Prostate gland (tissue), 2 donors: ENCODE measurements at regions of chr2 and their contacts with region 1.

Region 1: GRCh38 chr2:208265801-208266552 is at the start of gene PIKFYVE:
- DNase-seq: peak; percentile 94
- H3K4me3 ChIP-seq: peak within 1 kb of the TSS; percentile 74 to 93
- H3K27ac ChIP-seq: peak within 1 kb of the TSS; percentile 92 to 95
- H3K4me1 ChIP-seq: no peaks in the 10 kb centered on the region
- H3K27me3 ChIP-seq: no peaks in the 10 kb centered on the region
- CTCF ChIP-seq: peak in 1 of 4 experiments; percentile 18
- POLR2A ChIP-seq: peak; percentile 77
- total RNA-seq, gene PIKFYVE: 26.7 to 47.1 TPM

Region 2: DNA sequence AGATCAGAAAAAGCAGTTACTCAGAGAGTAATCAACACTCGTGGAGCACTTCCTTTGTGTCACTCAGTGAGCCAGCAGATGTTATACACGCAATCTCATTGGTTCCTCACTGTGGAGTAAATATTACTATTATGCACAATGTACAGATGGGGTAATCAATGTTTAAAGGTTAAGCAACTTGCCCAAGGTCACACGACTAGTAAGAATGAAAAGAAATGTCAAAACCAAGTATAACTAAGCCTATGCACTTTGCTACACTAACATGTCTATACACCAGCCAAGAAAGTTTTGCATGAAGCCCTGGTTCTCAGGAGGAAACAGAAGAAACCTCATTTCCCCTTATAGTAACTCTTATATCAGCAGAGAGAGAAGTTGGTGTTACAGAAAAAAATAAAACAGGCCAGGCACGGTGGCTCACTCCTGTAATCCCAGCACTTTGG is 646.2 kb before region 1 on chr2:
- intact Hi-C with region 1: loop called (anchors 10 kb)
- DNase-seq: no peak
- H3K4me3 ChIP-seq: no peak overlapping the region
- H3K27ac ChIP-seq: no peak overlapping the region
- H3K4me1 ChIP-seq: no peaks in the 10 kb centered on the region
- H3K27me3 ChIP-seq: no peaks in the 10 kb centered on the region
- CTCF ChIP-seq: no peak
- POLR2A ChIP-seq: no peak

Region 3: DNA sequence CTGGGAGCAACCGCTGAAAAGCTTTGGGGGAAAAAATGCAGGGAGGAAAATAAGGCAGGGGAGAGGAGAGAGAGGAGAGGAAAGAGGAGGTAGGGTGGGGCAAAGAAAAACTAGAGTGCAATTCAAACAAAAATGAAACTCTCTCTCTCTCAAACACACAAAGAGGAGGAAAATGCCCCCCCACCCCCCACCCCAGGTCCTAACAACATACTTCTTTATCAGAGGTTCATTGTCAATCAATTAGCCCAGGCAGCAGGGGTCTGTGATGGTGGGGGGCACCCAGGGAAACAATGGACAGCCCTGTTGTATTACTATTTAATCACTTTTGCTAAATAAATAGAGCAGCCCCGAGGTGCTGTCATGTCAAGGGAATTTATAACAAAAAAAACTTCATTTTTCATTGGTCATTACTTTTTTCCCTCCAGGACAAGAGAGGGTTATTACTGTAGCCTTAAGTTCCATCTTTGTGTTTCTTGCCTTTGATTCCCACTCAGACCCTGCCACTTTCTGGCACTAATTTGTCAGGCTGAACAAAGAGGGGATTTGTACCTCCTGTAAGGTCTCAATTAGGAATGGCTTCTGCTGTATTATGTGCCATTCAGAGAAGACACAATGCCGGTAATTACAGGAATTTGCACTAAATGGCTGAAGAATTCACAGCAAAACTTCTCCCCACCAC is 295.7 kb before region 1 on chr2:
- intact Hi-C with region 1: no loop called
- DNase-seq: no peak
- H3K4me3 ChIP-seq: no peak overlapping the region
- H3K27ac ChIP-seq: no peak overlapping the region
- H3K4me1 ChIP-seq: peaks cover 4% of the 10 kb centered on the region
- H3K27me3 ChIP-seq: no peaks in the 10 kb centered on the region
- CTCF ChIP-seq: no peak
- POLR2A ChIP-seq: no peak

Region 4: DNA sequence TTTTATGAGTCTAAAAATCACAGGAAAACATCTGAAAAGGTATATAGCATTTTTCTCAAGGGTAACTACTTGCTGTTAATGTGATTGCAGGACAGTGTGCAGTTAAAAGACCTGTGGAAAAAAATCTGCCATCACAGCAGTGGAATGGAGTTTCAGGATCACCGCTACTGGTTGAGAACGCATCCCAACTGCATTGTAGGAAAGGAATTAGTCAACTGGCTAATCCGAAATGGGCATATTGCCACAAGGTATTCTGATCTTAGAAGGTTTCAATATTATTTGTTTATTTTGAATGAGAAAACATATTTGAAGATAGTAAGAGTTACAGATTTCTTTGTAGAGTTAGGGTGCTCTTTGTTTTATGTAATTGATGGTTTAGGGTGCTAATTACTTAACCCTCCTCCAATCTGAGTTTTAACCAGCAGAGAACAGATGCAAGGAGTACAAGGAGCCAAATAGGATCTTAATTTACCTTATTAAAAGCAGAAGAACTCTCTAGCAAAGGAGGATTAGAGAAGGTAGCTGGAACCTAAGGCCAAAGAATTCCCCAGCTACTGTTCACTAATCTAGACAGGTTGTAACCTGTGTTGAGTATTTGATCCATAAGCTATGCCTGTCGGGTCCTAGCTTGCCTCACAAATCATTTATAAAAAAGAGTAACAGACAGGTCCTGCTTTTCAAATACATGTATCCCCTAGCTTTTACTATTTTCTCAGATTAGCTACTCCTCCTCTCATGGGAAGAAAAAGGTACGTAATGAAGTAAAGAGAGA is 35.1 kb after region 1 on chr2:
- intact Hi-C with region 1: no loop called
- DNase-seq: no peak
- H3K4me3 ChIP-seq: no peak overlapping the region
- H3K27ac ChIP-seq: peak overlapping the region in 1 of 2 donors; percentile 8
- H3K4me1 ChIP-seq: no peaks in the 10 kb centered on the region
- H3K27me3 ChIP-seq: no peaks in the 10 kb centered on the region
- CTCF ChIP-seq: no peak
- POLR2A ChIP-seq: no peak

Region 5: GRCh38 chr2:208350610-208351009 is 84.6 kb after region 1 on chr2:
- intact Hi-C with region 1: loop called (anchors 5 kb)
- DNase-seq: no peak
- H3K4me3 ChIP-seq: no peak overlapping the region
- H3K27ac ChIP-seq: no peak overlapping the region
- H3K4me1 ChIP-seq: no peaks in the 10 kb centered on the region
- H3K27me3 ChIP-seq: no peaks in the 10 kb centered on the region
- CTCF ChIP-seq: no peak
- POLR2A ChIP-seq: no peak